ENCODE measurements at regions of chr13 and their contacts with region 1.

Region 1: DNA sequence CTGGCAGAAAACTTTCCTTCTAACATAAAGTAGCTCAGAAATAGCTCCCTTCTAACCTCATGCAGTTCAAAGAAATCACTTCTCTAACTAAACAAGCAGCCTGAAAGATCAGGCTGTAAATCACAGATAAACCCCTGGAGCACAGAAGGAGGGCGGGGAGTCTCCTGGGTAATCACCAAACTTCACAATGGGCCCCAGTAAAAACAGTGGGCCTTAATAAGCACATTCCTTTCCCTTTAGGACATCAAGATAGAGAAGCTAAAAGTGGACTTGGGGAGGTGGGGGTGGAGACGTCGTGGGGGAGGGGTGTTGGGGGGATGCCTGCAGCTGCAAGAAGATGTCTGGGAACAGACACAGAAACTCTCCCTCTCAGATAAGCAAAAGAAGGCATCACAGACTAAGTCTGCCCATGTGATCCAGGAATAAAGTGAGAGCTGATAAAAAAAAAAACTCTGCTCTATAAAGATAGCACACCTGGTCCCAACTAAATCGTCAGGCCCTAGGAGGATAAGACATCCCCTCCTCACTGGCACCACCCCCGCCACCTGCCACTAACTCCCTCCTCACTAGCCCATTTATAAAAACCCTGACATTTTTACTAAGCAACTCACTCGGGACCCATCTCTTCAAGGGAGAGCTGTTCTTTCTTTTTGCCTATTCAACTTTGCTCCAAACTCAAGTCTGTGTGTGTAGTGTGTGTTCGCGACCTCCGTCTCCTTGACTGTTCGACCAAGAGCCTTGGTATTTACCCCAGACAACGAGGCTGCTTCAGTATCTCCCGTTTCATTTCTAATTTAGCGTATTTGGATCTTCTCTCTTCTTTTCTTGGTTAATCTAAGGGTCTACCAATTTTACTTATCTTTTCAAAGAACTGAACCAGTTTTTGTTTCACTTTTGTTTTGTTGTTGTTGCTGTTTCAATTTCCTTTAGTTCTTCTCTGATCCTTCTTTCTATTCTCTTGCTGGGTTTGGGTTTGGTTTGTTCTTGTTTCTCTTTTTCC is 31.7 kb downstream of the DNAJC15 start:
- DNase-seq: peak; percentile 38
- H3K4me3 Mint-ChIP-seq: no peak overlapping the region
- H3K27ac Mint-ChIP-seq: no peak overlapping the region
- H3K4me1 Mint-ChIP-seq: peaks cover 33% of the 10 kb centered on the region
- H3K27me3 Mint-ChIP-seq: no peaks in the 10 kb centered on the region

Region 2: DNA sequence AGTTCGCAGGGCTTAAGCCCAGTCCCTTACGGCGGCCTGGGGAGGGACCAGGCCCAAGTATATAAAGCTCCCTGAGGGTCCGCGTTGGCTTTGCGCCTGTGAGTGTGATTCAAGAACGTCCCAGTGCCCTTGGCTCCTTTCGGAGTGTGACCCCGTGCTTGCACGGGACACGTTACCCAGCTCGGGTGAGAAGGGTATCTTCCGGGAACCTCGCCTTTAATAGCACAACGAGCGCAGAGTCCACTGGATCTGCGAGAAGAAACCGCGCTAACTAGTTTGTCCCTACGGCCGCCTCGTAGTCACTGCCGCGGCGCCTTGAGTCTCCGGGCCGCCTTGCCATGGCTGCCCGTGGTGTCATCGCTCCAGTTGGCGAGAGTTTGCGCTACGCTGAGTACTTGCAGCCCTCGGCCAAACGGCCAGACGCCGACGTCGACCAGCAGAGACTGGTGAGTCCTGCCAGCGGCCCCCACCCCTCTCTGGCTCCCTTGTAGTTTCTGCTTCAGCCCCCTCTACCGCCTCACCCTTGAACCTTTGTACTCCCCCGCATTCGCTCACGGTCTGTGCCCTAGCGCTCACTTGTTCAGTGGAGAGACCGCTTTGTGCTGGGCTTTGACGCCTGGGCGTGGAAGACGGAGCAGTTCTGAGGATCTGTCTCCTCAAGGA is 31.7 kb before region 1 on chr13 and contains the start of gene DNAJC15:
- CTCF ChIA-PET with region 1: interaction called, 3 read pairs
- intact Hi-C with region 1: loop called (anchors 1 kb)
- DNase-seq: peak; percentile 88
- H3K4me3 Mint-ChIP-seq: peak within 1 kb of the TSS; percentile 98
- H3K27ac Mint-ChIP-seq: peak within 1 kb of the TSS; percentile 94
- H3K4me1 Mint-ChIP-seq: peaks cover 30% of the 10 kb centered on the region
- H3K27me3 Mint-ChIP-seq: no peaks in the 10 kb centered on the region
- total RNA-seq, gene DNAJC15: 14.5 to 16.8 TPM

Region 3: DNA sequence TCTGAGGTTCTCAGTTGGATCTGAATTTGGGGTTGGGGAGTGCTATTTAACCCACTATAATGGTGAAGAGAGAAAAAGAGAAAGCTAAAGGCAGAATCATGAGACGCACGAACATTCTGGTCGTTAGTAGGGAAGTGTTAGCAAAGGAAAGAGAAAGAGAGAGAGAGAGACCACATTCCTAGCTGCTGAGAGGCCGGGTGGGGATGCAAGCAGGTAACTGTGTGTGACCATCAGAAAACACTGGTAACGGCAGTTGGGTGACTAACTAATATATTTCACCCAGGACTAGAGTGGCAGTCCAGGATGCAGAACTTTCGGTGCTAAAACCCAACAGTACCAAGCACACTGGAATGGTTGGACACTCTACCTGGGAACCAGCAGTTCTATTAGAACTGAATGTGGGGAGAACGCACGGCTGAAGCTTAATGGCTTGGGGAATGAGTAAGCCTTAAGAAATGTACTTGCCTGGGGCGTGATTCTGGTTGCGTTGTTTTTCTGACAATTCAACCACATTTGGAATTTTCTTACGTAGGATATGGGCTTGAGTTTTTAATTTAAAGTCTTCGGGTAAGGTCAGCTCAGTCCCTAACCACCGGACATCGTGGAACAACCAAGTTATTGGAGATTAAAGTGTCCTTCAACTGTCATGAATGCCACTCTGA is 98.5 kb after region 1 on chr13:
- CTCF ChIA-PET with region 1: no interaction called
- intact Hi-C with region 1: no loop called
- DNase-seq: no peak
- H3K4me3 Mint-ChIP-seq: no peak overlapping the region
- H3K27ac Mint-ChIP-seq: no peak overlapping the region
- H3K4me1 Mint-ChIP-seq: no peaks in the 10 kb centered on the region
- H3K27me3 Mint-ChIP-seq: no peaks in the 10 kb centered on the region

Measured in activated naive CD4-positive, alpha-beta T cell treated with anti-CD3 and anti-CD28 coated beads for 36 hours (primary cell).